ENCODE measurements at regions of chr11 and their contacts with region 1.

Region 1: DNA sequence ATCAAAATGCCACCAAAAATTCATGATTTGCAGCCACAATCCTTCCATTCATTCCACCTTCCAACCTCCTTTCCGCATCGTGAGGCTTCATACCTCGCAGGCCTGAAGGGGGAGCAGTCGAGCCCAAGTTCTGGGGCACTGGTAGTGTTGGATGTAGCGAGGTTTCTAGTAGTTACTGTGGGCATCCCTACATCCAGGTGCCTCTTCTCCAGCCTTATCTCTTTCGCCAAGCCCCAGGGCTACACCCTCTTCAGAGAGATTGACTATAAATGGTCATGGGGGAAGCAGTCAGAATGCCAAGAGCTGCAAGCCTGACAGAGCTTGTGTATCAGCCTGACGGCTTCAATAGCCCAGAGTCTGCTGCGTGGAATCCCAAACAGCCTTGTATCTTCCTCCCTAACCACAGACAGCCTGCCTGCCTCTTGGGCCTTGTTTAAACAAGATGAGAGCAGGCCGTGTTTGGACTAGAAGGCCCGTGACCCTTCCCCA is 28.9 kb downstream of the CLMP start:
- DNase-seq: no peak
- ATAC-seq: peak; percentile 62
- H3K4me3 ChIP-seq: no peak overlapping the region
- H3K27ac ChIP-seq: no peak overlapping the region
- H3K4me1 ChIP-seq: no peaks in the 10 kb centered on the region
- H3K27me3 ChIP-seq: peaks cover 0 to 6% of the 10 kb centered on the region in 2 experiments; a peak in 2 of 5 replicates
- CTCF ChIP-seq: peak; percentile 54
- EP300 ChIP-seq: no peak
- POLR2A ChIP-seq: no peak
- RAD21 ChIP-seq: no peak

Region 2: GRCh38 chr11:123246749-123247495 is 80.8 kb after region 1 on chr11:
- CTCF ChIA-PET with region 1: interaction called, 3 read pairs
- POLR2A ChIA-PET with region 1: no interaction called
- in situ Hi-C with region 1: no loop called
- intact Hi-C with region 1: loop called (anchors 5 kb)
- DNase-seq: peak; percentile 52
- ATAC-seq: peak; percentile 96
- H3K4me3 ChIP-seq: no peak overlapping the region
- H3K27ac ChIP-seq: no peak overlapping the region
- H3K4me1 ChIP-seq: no peaks in the 10 kb centered on the region
- H3K27me3 ChIP-seq: peaks cover 2 to 10% of the 10 kb centered on the region in 2 experiments; a peak in 2 of 5 replicates
- CTCF ChIP-seq: peak; percentile 81
- EP300 ChIP-seq: no peak
- POLR2A ChIP-seq: no peak
- RAD21 ChIP-seq: peak; percentile 76

Region 3: DNA sequence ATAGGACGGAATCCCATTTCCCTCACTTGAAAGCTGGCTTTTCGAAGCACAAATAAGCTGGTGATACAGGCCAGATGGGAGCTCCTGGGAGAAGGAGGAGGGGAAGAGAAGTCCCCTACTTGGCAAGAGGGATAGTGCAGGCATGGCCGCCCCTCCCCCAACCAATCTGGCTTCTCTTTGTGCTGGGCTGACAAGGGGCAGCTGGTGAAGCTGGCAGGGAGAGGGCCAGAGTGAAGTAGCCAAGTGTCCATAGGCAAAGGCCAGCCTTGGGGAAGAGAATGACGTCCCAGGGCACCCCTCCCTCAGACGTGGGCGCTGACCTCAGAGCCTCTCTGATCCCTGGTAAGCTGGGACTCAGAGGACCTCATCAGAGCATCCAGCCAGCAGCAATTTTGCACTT is 185.3 kb after region 1 on chr11:
- CTCF ChIA-PET with region 1: no interaction called
- POLR2A ChIA-PET with region 1: no interaction called
- in situ Hi-C with region 1: no loop called
- intact Hi-C with region 1: no loop called
- DNase-seq: no peak
- ATAC-seq: no peak
- H3K4me3 ChIP-seq: no peak overlapping the region
- H3K27ac ChIP-seq: no peak overlapping the region
- H3K4me1 ChIP-seq: no peaks in the 10 kb centered on the region
- H3K27me3 ChIP-seq: peaks cover 0 to 21% of the 10 kb centered on the region in 2 experiments; a peak in 2 of 5 replicates
- CTCF ChIP-seq: no peak
- EP300 ChIP-seq: no peak
- POLR2A ChIP-seq: no peak
- RAD21 ChIP-seq: no peak

Measured in HepG2 (cell line).